Activated T-helper 2 cell treated with anti-CD3 and anti-CD28 coated beads, Interferon-gamma antibody, Interleukin-2, Interleukin-4, amounts not matched to agents 10 μg/mL and 5 μg/mL and 100 μg/mL, durations not matched to agents 14 hours and 24 hours and 36 hours (primary cell): ENCODE measurements at regions of chr6 and their contacts with region 1.

Region 1: DNA sequence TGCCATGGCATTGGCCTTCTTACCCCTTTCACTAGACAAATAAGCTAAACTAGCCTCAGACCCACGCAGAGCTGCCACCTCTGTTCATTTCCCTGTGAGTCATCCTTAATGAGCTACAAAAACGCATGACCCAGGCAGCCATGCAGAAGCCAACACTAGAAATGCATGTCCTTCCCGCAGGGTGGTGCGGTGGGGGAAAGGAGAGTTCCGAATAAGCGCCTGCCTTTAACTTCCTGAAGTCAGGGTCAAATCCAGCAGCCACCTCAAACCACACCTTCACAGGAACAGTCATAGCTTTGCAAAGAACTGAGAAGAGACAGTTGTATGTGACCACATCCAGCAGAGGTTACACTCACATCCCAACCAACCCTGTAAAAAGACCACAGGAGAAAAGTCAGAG is 40.4 kb downstream of the IRF4 start:
- DNase-seq: peak; percentile 69
- H3K4me3 Mint-ChIP-seq: no peak overlapping the region
- H3K27ac Mint-ChIP-seq: peak overlapping the region; percentile 64
- H3K4me1 Mint-ChIP-seq: peaks cover 80% of the 10 kb centered on the region
- H3K27me3 Mint-ChIP-seq: no peaks in the 10 kb centered on the region

Region 2: GRCh38 chr6:399785-400534 is 32.0 kb before region 1 on chr6:
- intact Hi-C with region 1: loop called (anchors 1 kb)
- DNase-seq: peak; percentile 57
- H3K4me3 Mint-ChIP-seq: peak overlapping the region; percentile 72
- H3K27ac Mint-ChIP-seq: peak overlapping the region; percentile 78
- H3K4me1 Mint-ChIP-seq: peaks cover 86% of the 10 kb centered on the region
- H3K27me3 Mint-ChIP-seq: no peaks in the 10 kb centered on the region

Region 3: DNA sequence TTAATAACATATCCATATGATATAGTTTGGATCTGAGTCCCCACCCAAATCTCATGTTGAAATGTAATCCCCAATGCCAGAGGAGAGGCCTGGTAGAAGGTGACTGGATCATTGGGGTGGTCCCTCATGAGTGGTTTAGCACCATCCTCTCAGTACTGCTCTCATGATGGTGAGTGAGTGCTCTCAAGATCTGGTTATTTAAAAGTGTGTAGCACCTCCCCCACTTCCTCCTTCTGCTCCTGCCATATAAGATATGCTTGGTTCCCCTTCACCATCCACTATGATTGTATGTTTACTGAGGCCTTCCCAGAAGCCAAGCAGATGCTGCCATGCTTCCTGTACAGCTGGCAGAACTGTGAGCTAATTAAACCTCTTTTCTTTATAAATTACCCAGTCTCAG is 17.5 kb before region 1 on chr6:
- intact Hi-C with region 1: loop called (anchors 2 kb)
- DNase-seq: no peak
- H3K4me3 Mint-ChIP-seq: no peak overlapping the region
- H3K27ac Mint-ChIP-seq: no peak overlapping the region
- H3K4me1 Mint-ChIP-seq: peaks cover 35% of the 10 kb centered on the region
- H3K27me3 Mint-ChIP-seq: no peaks in the 10 kb centered on the region

Region 4: GRCh38 chr6:446418-447366 is 14.7 kb after region 1 on chr6:
- intact Hi-C with region 1: loop called (anchors 1 kb)
- DNase-seq: peak; percentile 88
- H3K4me3 Mint-ChIP-seq: peak overlapping the region; percentile 40
- H3K27ac Mint-ChIP-seq: peak overlapping the region; percentile 91
- H3K4me1 Mint-ChIP-seq: peaks cover 54% of the 10 kb centered on the region
- H3K27me3 Mint-ChIP-seq: no peaks in the 10 kb centered on the region

Region 5: DNA sequence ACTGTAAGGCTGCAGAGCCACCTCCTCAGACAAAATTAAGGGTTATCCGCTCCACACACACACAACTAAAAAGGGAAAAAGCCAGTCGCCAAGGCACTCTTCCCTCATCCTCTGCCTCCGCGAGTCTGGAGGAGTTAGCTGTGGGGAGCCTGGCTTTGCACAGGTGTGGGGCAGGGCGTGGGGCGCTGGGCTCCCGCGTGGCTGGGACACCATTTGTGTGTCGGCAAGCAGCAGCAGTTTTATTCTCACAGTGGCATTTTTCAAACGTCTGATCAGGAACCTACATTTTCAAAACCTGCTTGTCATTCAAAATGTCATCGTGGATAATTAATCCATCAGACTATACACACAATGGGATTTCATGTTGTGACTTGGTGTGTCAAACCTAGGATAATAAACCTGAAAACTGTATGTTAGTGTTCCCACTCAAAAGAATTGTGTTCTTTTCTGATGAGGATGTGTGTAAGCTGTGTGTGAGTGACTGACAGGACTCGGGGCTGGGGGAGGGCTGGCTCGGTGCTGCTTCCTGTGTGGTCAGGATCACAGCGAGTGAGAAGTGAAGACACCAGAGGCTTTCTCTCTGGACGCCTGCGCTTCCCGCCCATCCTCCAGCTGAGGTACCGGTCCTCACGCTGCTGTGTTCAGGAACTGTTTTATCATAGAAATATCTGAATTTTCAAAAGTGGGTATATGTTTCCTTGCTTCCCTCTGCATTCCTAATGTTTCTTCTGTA is 42.6 kb after region 1 on chr6:
- intact Hi-C with region 1: loop called (anchors 2 kb)
- DNase-seq: peak; percentile 77
- H3K4me3 Mint-ChIP-seq: peak overlapping the region; percentile 71
- H3K27ac Mint-ChIP-seq: peak overlapping the region; percentile 83
- H3K4me1 Mint-ChIP-seq: peaks cover 67% of the 10 kb centered on the region
- H3K27me3 Mint-ChIP-seq: no peaks in the 10 kb centered on the region

Region 6: DNA sequence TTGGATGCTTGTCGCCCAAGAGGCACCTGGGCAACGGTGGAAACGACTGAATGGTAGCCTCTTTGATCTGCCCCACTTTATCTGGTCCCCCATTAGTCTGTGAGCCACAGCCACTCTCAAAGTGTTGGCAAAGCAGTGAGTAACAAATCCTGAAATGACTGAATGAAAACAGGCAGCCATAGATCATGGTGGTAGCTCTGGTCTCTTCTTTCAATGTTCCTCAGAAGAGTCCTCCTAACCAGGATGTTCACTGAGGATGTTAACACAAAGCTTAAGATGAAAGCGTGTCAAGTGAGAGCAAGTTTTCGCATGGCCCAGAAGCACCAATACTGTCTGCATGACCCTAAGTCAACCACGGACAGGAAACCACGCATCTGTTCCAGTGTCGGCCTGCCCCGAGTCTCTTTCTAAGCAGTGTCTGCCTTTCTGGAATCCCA is 66.8 kb after region 1 on chr6:
- intact Hi-C with region 1: loop called (anchors 1 kb)
- DNase-seq: peak; percentile 57
- H3K4me3 Mint-ChIP-seq: peak overlapping the region; percentile 72
- H3K27ac Mint-ChIP-seq: peak overlapping the region; percentile 86
- H3K4me1 Mint-ChIP-seq: peaks cover 81% of the 10 kb centered on the region
- H3K27me3 Mint-ChIP-seq: no peaks in the 10 kb centered on the region